Right cardiac atrium (tissue), 5 donors: ENCODE measurements at regions of chr2 and their contacts with region 1.

Region 1: DNA sequence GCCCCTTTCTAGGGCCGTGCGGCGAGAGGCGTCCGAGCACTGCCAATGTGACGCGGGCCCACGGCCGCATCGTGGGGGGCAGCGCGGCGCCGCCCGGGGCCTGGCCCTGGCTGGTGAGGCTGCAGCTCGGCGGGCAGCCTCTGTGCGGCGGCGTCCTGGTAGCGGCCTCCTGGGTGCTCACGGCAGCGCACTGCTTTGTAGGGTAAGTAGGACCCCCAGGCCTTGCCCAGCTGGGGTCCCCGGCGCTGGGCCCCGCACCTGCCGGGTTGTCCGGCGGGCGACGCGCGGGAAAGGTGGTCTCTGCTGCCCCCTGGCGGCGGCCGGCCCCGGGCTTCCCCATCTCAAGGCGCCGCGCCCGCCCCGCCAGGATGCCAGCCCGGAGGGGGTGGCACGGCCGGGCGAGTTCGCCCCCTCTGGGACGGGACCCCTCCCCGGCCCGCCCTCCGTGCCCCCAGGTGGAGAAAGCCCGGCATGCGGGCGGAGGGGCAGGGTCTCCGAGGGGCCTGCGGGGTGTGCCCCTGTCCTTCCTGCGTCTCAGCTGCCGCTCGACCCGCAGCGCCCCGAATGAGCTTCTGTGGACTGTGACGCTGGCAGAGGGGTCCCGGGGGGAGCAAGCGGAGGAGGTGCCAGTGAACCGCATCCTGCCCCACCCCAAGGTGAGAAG is 1.9 kb downstream of the PRSS56 start:
- DNase-seq: peak; percentile 52 to 88 (median 83)
- ATAC-seq: peak; percentile 38 to 46
- H3K4me3 ChIP-seq: no peak overlapping the region
- H3K27ac ChIP-seq: no peak overlapping the region
- H3K4me1 ChIP-seq: peaks cover 2% of the 10 kb centered on the region
- H3K27me3 ChIP-seq: no peaks in the 10 kb centered on the region

Region 2: DNA sequence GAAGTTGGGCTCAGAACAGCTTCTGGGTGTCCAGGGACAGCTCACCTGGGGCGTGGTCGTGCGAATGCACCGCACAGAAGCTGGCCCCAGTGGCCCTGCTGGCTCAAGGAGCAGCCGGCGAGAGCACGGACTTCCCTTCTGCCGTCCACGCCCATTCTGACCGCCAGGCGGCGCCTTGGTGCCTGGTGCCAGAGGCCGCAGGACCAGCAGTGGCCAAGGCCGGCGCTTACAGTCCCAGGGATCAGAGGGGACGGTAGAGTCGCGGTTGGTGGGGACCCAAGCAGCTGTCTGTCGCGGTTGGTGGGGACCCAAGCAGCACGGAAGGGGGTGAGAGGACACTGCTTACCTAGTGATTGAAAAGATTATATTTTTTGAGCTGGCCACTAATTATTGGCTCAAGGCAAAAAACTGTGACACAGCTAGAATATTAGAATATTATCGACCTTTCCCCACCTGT is 621.6 kb before region 1 on chr2:
- intact Hi-C with region 1: loop called in 2 of 4 experiments (anchors 5 to 10 kb)
- DNase-seq: peak; percentile 81 to 91 (median 89)
- ATAC-seq: peak; percentile 71 to 88
- H3K4me3 ChIP-seq: no peak overlapping the region
- H3K27ac ChIP-seq: no peak overlapping the region
- H3K4me1 ChIP-seq: no peaks in the 10 kb centered on the region
- H3K27me3 ChIP-seq: no peaks in the 10 kb centered on the region

Region 3: GRCh38 chr2:231925303-231926179 is 596.5 kb before region 1 on chr2:
- intact Hi-C with region 1: loop called in 1 of 4 experiments (anchors 10 kb)
- DNase-seq: peak; percentile 89 to 95 (median 94)
- ATAC-seq: peak; percentile 89 to 94
- H3K4me3 ChIP-seq: peak overlapping the region; percentile 18
- H3K27ac ChIP-seq: no peak overlapping the region
- H3K4me1 ChIP-seq: peaks cover 2% of the 10 kb centered on the region
- H3K27me3 ChIP-seq: no peaks in the 10 kb centered on the region

Region 4: GRCh38 chr2:232310121-232310520 is 212.0 kb before region 1 on chr2:
- intact Hi-C with region 1: no loop called
- DNase-seq: no peak
- ATAC-seq: no peak
- H3K4me3 ChIP-seq: no peak overlapping the region
- H3K27ac ChIP-seq: no peak overlapping the region
- H3K4me1 ChIP-seq: no peaks in the 10 kb centered on the region
- H3K27me3 ChIP-seq: no peaks in the 10 kb centered on the region

Region 5: GRCh38 chr2:232333361-232334270 is 188.5 kb before region 1 on chr2:
- intact Hi-C with region 1: loop called in 1 of 4 experiments (anchors 10 kb)
- DNase-seq: no peak
- ATAC-seq: no peak
- H3K4me3 ChIP-seq: no peak overlapping the region
- H3K27ac ChIP-seq: no peak overlapping the region
- H3K4me1 ChIP-seq: no peaks in the 10 kb centered on the region
- H3K27me3 ChIP-seq: no peaks in the 10 kb centered on the region

Region 6: DNA sequence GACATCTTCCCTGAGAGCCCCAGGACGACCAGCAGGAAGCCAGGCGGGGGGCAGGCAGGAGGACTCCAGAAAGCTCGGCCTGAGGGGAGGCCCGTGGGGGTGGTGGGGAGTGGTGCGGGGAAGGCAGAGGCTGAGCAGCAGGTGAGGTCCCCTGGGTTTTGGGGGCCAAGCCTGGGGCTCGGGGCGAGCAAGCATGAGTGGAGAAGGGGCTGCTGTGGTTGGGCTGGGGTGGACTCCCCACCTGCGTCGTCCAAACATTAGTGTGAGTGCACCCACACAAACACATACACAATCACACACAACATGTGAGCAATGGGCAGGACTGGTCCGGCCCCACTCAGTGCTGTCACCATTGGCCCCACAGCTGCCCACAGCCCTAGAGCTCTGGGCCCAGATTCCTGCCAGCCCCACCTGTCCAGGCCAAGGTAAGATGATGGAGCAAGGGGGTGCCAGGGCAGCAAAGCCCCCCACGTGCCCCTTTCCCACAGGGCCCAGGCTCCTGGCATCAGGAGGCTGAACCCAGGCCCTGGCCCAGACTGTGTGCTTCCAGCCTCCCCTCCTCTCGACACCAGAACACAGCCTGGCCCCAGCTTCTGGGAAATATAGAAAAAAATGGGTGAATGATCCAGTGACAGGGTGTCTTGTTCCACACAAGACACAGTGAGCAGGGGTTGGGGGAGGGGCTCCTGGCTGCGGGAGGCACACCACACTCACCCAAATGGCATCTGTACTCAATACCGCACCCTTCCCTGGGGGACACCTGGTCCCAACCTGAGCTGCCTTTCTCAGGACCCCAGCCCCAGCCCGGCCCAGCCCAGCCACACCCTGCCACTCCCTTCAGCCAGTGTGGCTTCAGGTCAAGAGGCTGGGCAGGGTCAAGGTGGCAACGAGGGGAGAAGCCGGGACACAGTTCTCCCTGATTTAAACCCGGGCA is 144.0 kb before region 1 on chr2:
- intact Hi-C with region 1: no loop called
- DNase-seq: no peak
- ATAC-seq: no peak
- H3K4me3 ChIP-seq: no peak overlapping the region
- H3K27ac ChIP-seq: no peak overlapping the region
- H3K4me1 ChIP-seq: no peaks in the 10 kb centered on the region
- H3K27me3 ChIP-seq: no peaks in the 10 kb centered on the region

Region 7: GRCh38 chr2:232444409-232445148 is 77.5 kb before region 1 on chr2:
- intact Hi-C with region 1: loop called in 3 of 4 experiments (anchors 2 to 5 kb)
- DNase-seq: peak in 2 of 3 donors; percentile 42 to 66
- ATAC-seq: no peak
- H3K4me3 ChIP-seq: no peak overlapping the region
- H3K27ac ChIP-seq: no peak overlapping the region
- H3K4me1 ChIP-seq: no peaks in the 10 kb centered on the region
- H3K27me3 ChIP-seq: no peaks in the 10 kb centered on the region

Region 8: GRCh38 chr2:232473467-232473890 is 48.6 kb before region 1 on chr2:
- intact Hi-C with region 1: no loop called
- DNase-seq: no peak
- ATAC-seq: peak in 1 of 2 donors; percentile 24
- H3K4me3 ChIP-seq: no peak overlapping the region
- H3K27ac ChIP-seq: no peak overlapping the region
- H3K4me1 ChIP-seq: no peaks in the 10 kb centered on the region
- H3K27me3 ChIP-seq: no peaks in the 10 kb centered on the region

Region 9: DNA sequence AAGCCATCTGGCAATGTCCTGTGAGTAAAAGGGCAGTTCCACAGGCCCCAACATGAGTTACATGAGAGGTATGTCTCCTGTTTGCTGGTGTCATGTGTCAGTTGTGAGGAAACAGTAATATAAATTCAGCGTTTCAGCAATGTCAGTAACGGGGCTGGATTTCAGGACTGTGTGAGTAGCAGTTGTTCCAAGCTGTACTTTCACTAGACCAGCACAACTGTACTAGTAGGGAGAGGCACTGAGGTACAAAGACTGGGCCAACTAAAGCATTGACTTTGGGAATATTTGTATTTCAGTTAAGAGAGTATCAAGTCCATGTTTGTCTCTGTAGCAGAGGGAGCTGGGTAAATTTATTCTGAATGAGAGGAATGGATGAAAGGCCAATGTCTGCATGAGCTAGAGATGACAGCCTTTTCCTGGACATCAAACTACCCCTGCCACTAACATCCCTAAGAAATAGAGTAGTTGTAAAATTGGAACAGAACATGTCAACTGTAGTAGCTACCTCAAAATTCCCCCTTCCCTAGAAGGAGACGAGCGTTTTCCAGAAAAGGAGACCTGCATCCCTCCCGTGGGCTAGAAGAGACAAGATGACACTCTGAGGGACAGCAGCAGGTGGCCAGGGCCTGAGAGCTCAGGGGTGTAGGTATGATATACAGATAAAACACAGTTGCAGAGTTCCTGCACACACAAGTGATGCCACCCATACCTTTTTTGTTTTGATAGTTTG is 52.7 kb after region 1 on chr2:
- intact Hi-C with region 1: no loop called
- DNase-seq: no peak
- ATAC-seq: no peak
- H3K4me3 ChIP-seq: no peak overlapping the region
- H3K27ac ChIP-seq: no peak overlapping the region
- H3K4me1 ChIP-seq: no peaks in the 10 kb centered on the region
- H3K27me3 ChIP-seq: no peaks in the 10 kb centered on the region